HepG2 (cell line): ENCODE measurements at regions of chr7 and their contacts with region 1.

Region 1: GRCh38 chr7:112869111-112869757 is 79.0 kb upstream of the TMEM168 start:
- DNase-seq: peak; percentile 52
- ATAC-seq: peak; percentile 95
- H3K4me3 ChIP-seq: no peak overlapping the region
- H3K27ac ChIP-seq: no peak overlapping the region
- H3K4me1 ChIP-seq: no peaks in the 10 kb centered on the region
- H3K27me3 ChIP-seq: no peaks in the 10 kb centered on the region
- CTCF ChIP-seq: peak; percentile 90
- EP300 ChIP-seq: no peak
- POLR2A ChIP-seq: no peak
- RAD21 ChIP-seq: peak; percentile 87

Region 2: GRCh38 chr7:112749775-112750174 is 119.5 kb before region 1 on chr7:
- CTCF ChIA-PET with region 1: no interaction called
- POLR2A ChIA-PET with region 1: no interaction called
- in situ Hi-C with region 1: no loop called
- intact Hi-C with region 1: loop called (anchors 1 kb)
- DNase-seq: no peak
- ATAC-seq: peak; percentile 28; the same call in 1 of the 3 replicates
- H3K4me3 ChIP-seq: no peak overlapping the region
- H3K27ac ChIP-seq: no peak overlapping the region
- H3K4me1 ChIP-seq: no peaks in the 10 kb centered on the region
- H3K27me3 ChIP-seq: no peaks in the 10 kb centered on the region
- CTCF ChIP-seq: 0 out of 2 replicates have a peak, but pooled peaks have one; percentile 10
- EP300 ChIP-seq: no peak
- POLR2A ChIP-seq: no peak
- RAD21 ChIP-seq: no peak

Region 3: DNA sequence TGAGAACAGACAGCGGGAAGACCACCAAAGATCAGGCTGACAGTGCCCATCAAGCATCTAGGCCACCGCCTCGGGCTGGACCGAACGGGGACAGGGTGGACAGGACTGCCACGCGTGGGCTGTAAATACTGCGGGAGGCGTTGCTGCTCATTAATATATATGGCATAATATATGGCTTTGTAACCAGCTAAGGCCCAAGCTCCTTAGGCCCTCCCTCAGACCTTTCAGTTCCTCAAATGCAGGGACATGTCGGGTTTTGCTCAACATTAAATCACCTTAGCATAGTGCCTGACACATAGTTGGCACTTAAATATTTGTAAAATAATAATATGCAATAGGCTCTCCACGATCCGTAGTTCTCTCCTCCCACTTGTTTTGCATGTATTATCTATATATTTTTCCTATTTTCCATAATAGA is 78.6 kb before region 1 on chr7:
- CTCF ChIA-PET with region 1: no interaction called
- POLR2A ChIA-PET with region 1: no interaction called
- in situ Hi-C with region 1: no loop called
- intact Hi-C with region 1: no loop called
- DNase-seq: no peak
- ATAC-seq: no peak; the same call in 2 of the 3 replicates
- H3K4me3 ChIP-seq: peak overlapping the region; percentile 67 to 78 (median 73)
- H3K27ac ChIP-seq: peak overlapping the region; percentile 93
- H3K4me1 ChIP-seq: peaks cover 22% of the 10 kb centered on the region
- H3K27me3 ChIP-seq: peaks cover 0 to 2% of the 10 kb centered on the region in 2 experiments; a peak in 1 of 5 replicates
- CTCF ChIP-seq: no peak
- EP300 ChIP-seq: no peak
- POLR2A ChIP-seq: no peak
- RAD21 ChIP-seq: no peak

Region 4: GRCh38 chr7:112898432-112899290 is 29.4 kb after region 1 on chr7:
- CTCF ChIA-PET with region 1: interaction called, 23 read pairs
- POLR2A ChIA-PET with region 1: no interaction called
- in situ Hi-C with region 1: no loop called
- intact Hi-C with region 1: loop called (anchors 1 kb)
- DNase-seq: peak; percentile 79
- ATAC-seq: peak; percentile 92
- H3K4me3 ChIP-seq: peak overlapping the region in 1 of 3 experiments; percentile 35; a peak in 1 of 6 replicates
- H3K27ac ChIP-seq: peak overlapping the region; percentile 80
- H3K4me1 ChIP-seq: peaks cover 39% of the 10 kb centered on the region
- H3K27me3 ChIP-seq: no peaks in the 10 kb centered on the region
- CTCF ChIP-seq: peak; percentile 82
- EP300 ChIP-seq: 0 out of 4 replicates have a peak, but pooled peaks of 1 of the 2 experiments have one; percentile 21
- POLR2A ChIP-seq: no peak
- RAD21 ChIP-seq: peak; percentile 80